Common myeloid progenitor, CD34-positive (primary cell): ENCODE measurements at regions of chr3 and their contacts with region 1.

Region 1: GRCh38 chr3:47522082-47522987 is 8.8 kb upstream of the ELP6 start:
- DNase-seq: peak; percentile 83 to 93 (median 91)
- H3K4me3 ChIP-seq: no peak overlapping the region
- H3K27ac ChIP-seq: no peak overlapping the region
- H3K4me1 ChIP-seq: peaks cover 0 to 9% (median 5%) of the 10 kb centered on the region in 4 experiments
- H3K27me3 ChIP-seq: no peaks in the 10 kb centered on the region

Region 2: GRCh38 chr3:47444103-47444502 is 78.2 kb before region 1 on chr3:
- CTCF ChIA-PET with region 1: no interaction called
- POLR2A ChIA-PET with region 1: no interaction called
- DNase-seq: no peak
- H3K4me3 ChIP-seq: no peak overlapping the region
- H3K27ac ChIP-seq: no peak overlapping the region
- H3K4me1 ChIP-seq: no peaks in the 10 kb centered on the region
- H3K27me3 ChIP-seq: no peaks in the 10 kb centered on the region

Region 3: DNA sequence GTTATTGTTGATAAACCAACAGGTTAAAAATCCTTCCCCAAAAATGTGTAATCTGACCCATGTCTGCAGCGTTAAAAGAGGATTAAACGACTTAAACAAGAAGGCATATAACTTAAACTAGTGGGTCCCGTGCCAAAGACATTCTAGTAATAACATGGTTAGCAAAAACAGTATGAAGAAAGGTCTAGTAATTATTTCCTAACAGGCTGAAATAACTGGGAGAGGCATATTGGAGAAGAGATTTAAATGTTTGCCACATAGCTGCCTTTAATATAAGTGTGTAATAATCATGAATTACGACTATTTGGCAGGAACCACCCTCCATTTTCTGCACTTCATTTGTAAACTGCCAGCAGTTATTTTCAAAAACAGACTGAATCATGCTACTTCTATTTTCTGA is 124.0 kb after region 1 on chr3:
- CTCF ChIA-PET with region 1: no interaction called
- POLR2A ChIA-PET with region 1: no interaction called
- DNase-seq: no peak
- H3K4me3 ChIP-seq: no peak overlapping the region
- H3K27ac ChIP-seq: no peak overlapping the region
- H3K4me1 ChIP-seq: no peaks in the 10 kb centered on the region
- H3K27me3 ChIP-seq: no peaks in the 10 kb centered on the region

Region 4: GRCh38 chr3:47799733-47800132 is 277.4 kb after region 1 on chr3:
- CTCF ChIA-PET with region 1: interaction called, 14 read pairs
- POLR2A ChIA-PET with region 1: no interaction called
- DNase-seq: peak; percentile 10 to 19 (median 14)
- H3K4me3 ChIP-seq: no peak overlapping the region
- H3K27ac ChIP-seq: no peak overlapping the region
- H3K4me1 ChIP-seq: peaks cover 4 to 21% (median 15%) of the 10 kb centered on the region in 4 experiments
- H3K27me3 ChIP-seq: no peaks in the 10 kb centered on the region